HCT116 (cell line): ENCODE measurements at regions of chr3 and their contacts with region 1.

Region 1: DNA sequence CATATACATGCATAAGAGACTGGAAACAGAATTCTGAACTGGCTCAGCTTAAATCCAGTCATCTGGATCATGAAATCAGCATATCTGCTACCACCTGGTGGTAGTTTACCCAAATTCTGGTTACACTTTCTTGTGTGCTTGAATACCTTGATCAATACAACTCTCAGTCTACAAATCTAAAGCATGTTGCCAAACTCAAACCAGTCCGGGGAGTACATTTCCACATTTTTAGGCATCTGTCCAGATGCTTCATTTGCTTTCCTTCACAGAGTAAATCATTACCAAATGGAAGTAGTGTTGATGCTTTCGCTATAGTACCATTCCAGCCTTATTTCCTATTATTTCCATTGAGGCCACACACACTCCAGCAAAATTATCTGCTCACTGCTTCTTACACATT is 126.4 kb downstream of the P2RY1 start:
- DNase-seq: peak; percentile 60
- ATAC-seq: peak; percentile 82
- H3K4me3 ChIP-seq: no peak overlapping the region
- H3K27ac ChIP-seq: no peak overlapping the region
- H3K4me1 ChIP-seq: peaks cover 5 to 14% of the 10 kb centered on the region in 2 experiments; a peak in 3 of 4 replicates
- H3K27me3 ChIP-seq: no peaks in the 10 kb centered on the region
- CTCF ChIP-seq: peak; percentile 48 to 68 (median 51)
- POLR2A ChIP-seq: no peak
- RAD21 ChIP-seq: peak; percentile 80

Region 2: DNA sequence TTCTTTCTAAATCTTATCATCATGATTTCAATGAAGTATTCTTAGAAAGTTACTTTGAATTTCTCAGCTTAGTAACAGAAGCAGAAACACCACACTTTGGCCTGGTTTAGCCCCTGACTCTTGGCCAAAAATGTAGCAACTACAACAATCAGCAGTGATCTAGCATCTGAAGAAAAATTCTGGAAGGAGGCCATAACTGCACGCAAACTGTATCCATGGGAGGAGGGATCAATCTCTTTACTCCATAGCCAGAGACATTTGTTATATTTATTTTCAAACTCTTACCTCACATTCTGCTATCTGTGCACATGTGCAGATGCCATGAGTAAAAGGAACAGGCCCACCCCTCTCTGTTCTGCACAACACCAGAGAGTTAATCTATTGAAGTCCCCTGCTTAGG is 377.4 kb before region 1 on chr3:
- CTCF ChIA-PET with region 1: no interaction called
- POLR2A ChIA-PET with region 1: no interaction called
- RAD21 ChIA-PET with region 1: no interaction called
- intact Hi-C with region 1: no loop called
- DNase-seq: no peak
- ATAC-seq: no peak
- H3K4me3 ChIP-seq: no peak overlapping the region
- H3K27ac ChIP-seq: no peak overlapping the region
- H3K4me1 ChIP-seq: no peaks in the 10 kb centered on the region
- H3K27me3 ChIP-seq: no peaks in the 10 kb centered on the region
- CTCF ChIP-seq: no peak
- POLR2A ChIP-seq: no peak
- RAD21 ChIP-seq: no peak

Region 3: DNA sequence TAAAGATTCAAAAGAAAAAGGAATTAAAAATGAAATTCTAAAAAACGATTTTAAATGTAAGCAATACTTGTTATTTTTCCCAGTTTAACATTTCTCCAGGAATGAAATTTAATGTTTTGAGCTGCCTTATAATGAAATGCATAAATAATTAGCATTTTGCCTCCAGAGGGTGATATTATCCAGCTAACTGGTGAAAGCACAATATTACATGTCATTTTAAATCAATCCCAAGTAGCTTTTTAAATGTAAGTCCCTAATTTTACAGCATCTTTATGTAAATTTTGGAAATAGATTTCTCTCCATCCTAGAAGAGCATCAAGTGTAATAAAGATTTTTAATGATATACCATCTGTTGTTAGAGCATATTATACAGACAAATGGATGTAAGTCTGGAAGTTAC is 265.5 kb before region 1 on chr3:
- CTCF ChIA-PET with region 1: interaction called, 4 read pairs
- POLR2A ChIA-PET with region 1: no interaction called
- RAD21 ChIA-PET with region 1: no interaction called
- intact Hi-C with region 1: loop called (anchors 10 kb)
- DNase-seq: no peak
- ATAC-seq: no peak
- H3K4me3 ChIP-seq: no peak overlapping the region
- H3K27ac ChIP-seq: no peak overlapping the region
- H3K4me1 ChIP-seq: no peaks in the 10 kb centered on the region
- H3K27me3 ChIP-seq: no peaks in the 10 kb centered on the region
- CTCF ChIP-seq: no peak
- POLR2A ChIP-seq: no peak
- RAD21 ChIP-seq: peak; percentile 25; the same call in 1 of the 2 replicates